ENCODE measurements at regions of chr2 and their contacts with region 1.

Region 1: DNA sequence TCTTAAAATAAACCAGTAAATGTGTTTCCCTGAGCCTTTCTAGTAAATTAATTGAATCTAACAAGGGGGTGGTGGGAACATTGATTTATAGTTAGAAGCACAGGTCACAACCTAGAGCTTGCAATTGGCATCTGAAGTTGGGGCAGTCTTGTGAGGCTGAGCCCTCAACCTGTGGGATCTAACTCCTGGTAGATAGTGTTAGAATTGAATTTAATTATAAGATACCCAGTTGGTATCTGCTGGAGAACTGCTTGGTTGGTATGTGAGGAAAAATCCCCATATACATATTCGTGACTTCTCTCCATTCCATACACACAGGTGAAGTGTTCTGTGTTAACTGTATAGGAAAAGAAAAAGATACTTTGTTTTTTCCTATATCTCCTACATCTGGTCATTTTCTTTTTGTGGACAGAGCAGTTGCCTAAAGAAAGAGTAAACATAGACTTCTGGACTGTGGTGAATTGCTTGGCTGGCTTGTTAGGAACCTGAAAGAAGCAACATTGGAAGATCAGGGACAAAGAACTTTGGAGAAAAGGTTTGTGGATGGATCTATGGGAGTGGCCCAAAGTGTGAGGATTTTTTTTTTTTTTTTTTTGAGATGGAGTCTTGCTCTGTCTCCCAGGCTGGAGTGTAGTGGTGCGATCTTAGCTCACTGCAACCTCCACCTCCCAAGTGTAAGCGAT is 36.7 kb downstream of the THNSL2 start:
- DNase-seq: no peak
- ATAC-seq: no peak
- H3K4me3 ChIP-seq: no peak overlapping the region
- H3K27ac ChIP-seq: no peak overlapping the region
- H3K4me1 ChIP-seq: no peaks in the 10 kb centered on the region
- H3K27me3 ChIP-seq: peaks cover 6% of the 10 kb centered on the region
- CTCF ChIP-seq: no peak

Region 2: DNA sequence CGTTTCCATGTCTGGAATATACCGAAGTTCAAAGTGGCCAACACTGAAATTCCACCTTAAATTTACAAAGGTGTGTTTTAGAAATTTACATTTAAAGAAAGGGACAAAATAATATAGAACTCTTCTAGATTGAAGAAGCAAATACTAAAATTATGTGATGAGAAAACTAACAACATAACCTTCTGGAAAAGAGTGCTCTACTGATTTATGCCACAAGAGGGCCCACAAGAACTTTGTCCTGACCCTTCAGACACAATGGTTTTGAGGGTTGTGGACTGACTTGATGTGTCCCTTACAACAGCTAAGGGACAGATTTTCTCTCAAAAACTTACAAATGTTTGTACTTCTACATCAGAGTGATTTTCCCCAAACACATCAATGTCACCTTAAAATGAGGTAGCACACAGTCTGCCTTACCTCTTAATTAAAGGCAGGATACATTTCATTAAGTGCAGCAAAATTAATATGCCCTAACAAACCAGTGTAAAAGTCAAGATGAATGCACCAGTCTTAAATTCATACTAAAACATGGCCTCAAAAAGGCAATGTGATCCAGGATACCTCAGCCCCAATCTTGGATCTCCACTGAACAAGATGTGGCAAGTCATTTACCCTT is 384.3 kb after region 1 on chr2:
- CTCF ChIA-PET with region 1: no interaction called
- POLR2A ChIA-PET with region 1: interaction called, 11 read pairs
- in situ Hi-C with region 1: no loop called
- intact Hi-C with region 1: no loop called
- DNase-seq: peak; percentile 58
- ATAC-seq: peak; percentile 94
- H3K4me3 ChIP-seq: no peak overlapping the region
- H3K27ac ChIP-seq: no peak overlapping the region
- H3K4me1 ChIP-seq: no peaks in the 10 kb centered on the region
- H3K27me3 ChIP-seq: no peaks in the 10 kb centered on the region
- CTCF ChIP-seq: peak; percentile 80; the same call in 1 of the 2 replicates

Measured in Panc1 (cell line).